HEK293 (cell line): ENCODE measurements at regions of chr18 and their contacts with region 1.

Region 1: GRCh38 chr18:623761-624620 is 27.2 kb downstream of the CLUL1 start:
- H3K4me3 ChIP-seq: no peak overlapping the region
- H3K27ac ChIP-seq: no peak overlapping the region
- H3K4me1 ChIP-seq: no peaks in the 10 kb centered on the region
- CTCF ChIP-seq: no peak

Region 2: GRCh38 chr18:245282-245847 is 378.6 kb before region 1 on chr18:
- CTCF ChIA-PET with region 1: no interaction called
- POLR2A ChIA-PET with region 1: no interaction called
- H3K4me3 ChIP-seq: no peak overlapping the region
- H3K27ac ChIP-seq: no peak overlapping the region
- H3K4me1 ChIP-seq: no peaks in the 10 kb centered on the region
- CTCF ChIP-seq: no peak

Region 3: GRCh38 chr18:463827-464541 is 160.0 kb before region 1 on chr18:
- CTCF ChIA-PET with region 1: no interaction called
- POLR2A ChIA-PET with region 1: no interaction called
- H3K4me3 ChIP-seq: no peak overlapping the region
- H3K27ac ChIP-seq: no peak overlapping the region
- H3K4me1 ChIP-seq: no peaks in the 10 kb centered on the region
- CTCF ChIP-seq: no peak

Region 4: DNA sequence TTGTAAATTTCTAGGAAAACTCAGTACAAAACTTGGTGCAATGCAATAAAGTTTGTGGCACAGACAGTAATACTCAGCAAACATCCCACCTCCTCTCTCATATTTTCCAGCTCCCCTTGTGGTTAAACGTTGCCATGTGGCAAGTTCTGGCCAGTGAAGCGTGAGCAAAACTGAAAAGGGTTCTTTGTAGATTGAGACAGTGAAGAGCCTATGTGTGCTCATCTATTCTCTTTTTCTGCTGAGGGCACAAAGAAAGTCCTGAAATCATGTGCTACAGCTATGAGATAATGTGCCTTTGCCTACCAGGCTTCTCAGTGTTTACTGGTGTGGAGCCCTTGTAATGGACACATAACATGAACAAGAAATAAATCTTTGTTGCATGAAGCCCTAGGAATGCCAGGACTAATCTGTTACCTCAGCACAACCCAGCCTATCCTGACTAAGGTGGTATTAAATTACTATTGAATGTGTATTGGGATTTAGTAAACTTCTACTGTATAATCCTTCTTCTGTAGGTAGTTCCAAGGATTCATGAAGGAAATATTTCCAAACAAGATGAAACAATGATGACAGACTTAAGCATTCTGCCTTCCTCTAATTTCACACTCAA is 20.5 kb after region 1 on chr18:
- CTCF ChIA-PET with region 1: interaction called, 31 read pairs
- POLR2A ChIA-PET with region 1: interaction called, 4 read pairs
- H3K4me3 ChIP-seq: no peak overlapping the region
- H3K27ac ChIP-seq: no peak overlapping the region
- H3K4me1 ChIP-seq: no peaks in the 10 kb centered on the region
- CTCF ChIP-seq: no peak

Region 5: DNA sequence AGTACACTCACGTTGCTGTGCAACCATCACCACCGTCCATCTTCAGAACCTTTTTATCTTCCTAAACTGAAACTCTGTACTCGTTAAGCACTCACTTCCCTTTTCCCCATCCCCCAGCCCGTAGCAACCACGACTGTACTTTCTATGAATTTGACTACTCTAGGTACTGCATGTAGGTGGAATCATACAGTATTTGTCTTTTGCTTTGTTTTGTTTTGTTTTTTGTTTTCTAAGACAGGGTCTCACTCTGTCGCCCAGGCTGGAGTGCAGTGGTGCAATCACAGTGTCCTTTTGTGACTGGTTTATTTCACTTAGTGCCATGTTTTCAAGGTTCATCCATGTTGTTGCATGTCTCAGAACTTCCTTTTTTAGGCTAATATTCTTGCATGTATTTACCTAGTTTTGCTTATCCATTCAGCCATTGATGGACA is 26.5 kb after region 1 on chr18:
- CTCF ChIA-PET with region 1: interaction called, 31 read pairs
- POLR2A ChIA-PET with region 1: interaction called, 4 read pairs
- H3K4me3 ChIP-seq: no peak overlapping the region
- H3K27ac ChIP-seq: no peak overlapping the region
- H3K4me1 ChIP-seq: peaks cover 8% of the 10 kb centered on the region; the same call in 1 of the 2 replicates
- CTCF ChIP-seq: no peak